ENCODE measurements at regions of chr7 and their contacts with region 1.

Region 1: DNA sequence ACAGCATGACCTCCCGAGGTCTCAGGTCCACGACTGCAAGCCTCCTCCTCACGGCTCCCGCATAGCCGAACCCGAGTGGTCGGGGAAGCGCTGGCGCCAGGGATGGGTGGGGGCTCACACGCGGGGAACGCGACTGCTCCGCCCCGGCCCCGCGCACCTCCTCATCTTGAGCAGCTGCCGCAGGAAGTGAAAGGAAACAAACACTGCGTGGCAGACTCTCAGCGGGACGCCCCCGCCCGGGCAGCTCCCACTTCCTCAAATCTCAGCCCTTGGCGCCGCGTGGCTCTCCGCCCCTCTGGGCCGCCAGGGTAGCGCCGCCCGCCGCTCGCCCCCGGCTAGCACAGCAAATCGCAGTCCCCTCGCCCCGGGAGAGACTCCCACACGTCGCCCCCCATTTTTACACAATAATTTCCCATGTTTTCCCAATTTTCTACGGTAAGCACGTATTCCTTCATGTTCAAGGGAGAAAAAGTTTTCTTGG is at the start of gene TMEM243:
- DNase-seq: peak; percentile 72 to 91 (median 89)
- ATAC-seq: peak; percentile 81
- H3K4me3 ChIP-seq: peak within 1 kb of the TSS; percentile 90
- H3K4me3 Mint-ChIP-seq: peak within 1 kb of the TSS; percentile 96 to 100 (median 99)
- H3K27ac ChIP-seq: peak within 1 kb of the TSS; percentile 96
- H3K27ac Mint-ChIP-seq: peak within 1 kb of the TSS; percentile 94 to 100 (median 99)
- H3K4me1 ChIP-seq: peaks cover 22 to 41% of the 10 kb centered on the region in 2 donors
- H3K4me1 Mint-ChIP-seq: peaks cover 18 to 44% (median 32%) of the 10 kb centered on the region in 7 donors
- H3K27me3 ChIP-seq: no peaks in the 10 kb centered on the region
- H3K27me3 Mint-ChIP-seq: peaks cover 0 to 12% (median 0%) of the 10 kb centered on the region in 5 donors
- total RNA-seq, gene TMEM243: 50.0 to 153 (median 125) TPM

Region 2: DNA sequence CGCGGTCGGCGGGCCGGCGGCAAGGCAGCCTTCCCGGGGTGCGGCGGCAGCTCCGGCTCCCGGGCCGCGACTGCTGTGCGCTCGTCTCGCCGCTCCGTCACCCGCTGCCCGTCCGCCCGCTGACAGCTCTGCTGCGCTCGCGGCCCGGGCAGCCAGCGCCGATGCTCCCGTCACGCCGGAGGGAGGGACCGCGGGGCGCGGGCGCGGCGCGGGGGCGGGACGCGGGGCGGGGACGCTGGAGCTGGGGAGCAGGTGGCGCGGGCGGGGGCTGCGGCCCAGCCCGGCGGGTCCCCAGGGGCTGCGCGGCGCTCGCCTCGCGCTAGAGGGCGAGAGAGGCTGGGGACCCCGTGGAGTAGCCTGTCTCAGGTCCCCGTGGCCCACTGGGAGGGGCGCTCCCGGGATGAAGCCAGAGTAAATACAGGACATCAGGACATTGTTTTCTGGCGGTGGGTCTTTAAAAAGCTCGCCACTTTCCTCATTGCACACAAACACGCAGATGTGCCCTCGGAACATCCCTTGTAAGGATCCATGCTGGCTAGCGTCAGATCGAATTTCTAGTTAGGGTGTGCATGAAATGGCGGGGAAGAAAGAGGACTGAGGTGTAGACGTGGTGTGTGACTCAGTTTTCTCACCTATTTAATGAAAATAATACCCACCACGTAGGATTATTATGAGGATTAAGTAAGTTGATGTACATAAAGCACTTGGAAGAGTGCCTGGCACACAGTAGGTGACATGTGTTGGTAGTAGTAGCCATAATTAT is 159.9 kb before region 1 on chr7 and contains the start of gene ELAPOR2:
- CTCF ChIA-PET with region 1: no interaction called
- POLR2A ChIA-PET with region 1: interaction called, 9 read pairs
- intact Hi-C with region 1: loop called (anchors 1 to 2 kb)
- DNase-seq: peak; percentile 68 to 83 (median 75)
- ATAC-seq: peak; percentile 97
- H3K4me3 ChIP-seq: peak within 1 kb of the TSS; percentile 66
- H3K4me3 Mint-ChIP-seq: peak within 1 kb of the TSS; percentile 78 to 88 (median 84)
- H3K27ac ChIP-seq: peak within 1 kb of the TSS; percentile 52
- H3K27ac Mint-ChIP-seq: peak within 1 kb of the TSS in 8 of 9 donors; percentile 6 to 89 (median 70)
- H3K4me1 ChIP-seq: peaks cover 9 to 10% of the 10 kb centered on the region in 2 donors
- H3K4me1 Mint-ChIP-seq: peaks cover 7 to 18% (median 14%) of the 10 kb centered on the region in 7 donors
- H3K27me3 ChIP-seq: no peaks in the 10 kb centered on the region
- H3K27me3 Mint-ChIP-seq: peaks cover 9 to 23% (median 14%) of the 10 kb centered on the region in 5 donors
- total RNA-seq, gene ELAPOR2: 5.3 to 11.0 (median 6.4) TPM

Region 3: DNA sequence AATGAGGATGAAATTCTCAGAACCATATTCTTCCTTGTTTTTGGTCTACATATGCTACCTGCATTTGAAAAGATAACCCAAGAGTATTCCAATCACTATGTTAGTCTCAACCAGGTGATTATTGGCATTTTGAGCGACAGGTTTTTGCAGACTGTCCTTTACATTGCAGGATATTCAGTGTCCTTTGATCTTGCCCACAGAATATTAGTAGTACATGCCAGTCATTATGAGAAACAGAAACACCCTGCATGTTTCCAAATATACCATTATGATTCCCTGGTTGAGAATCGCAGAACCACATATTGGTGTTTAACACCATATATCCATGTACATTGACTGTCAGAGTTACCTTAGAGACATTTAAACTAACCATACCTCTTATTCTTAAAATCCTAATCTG is 30.7 kb before region 1 on chr7:
- CTCF ChIA-PET with region 1: interaction called, 5 read pairs
- POLR2A ChIA-PET with region 1: interaction called, 25 read pairs
- intact Hi-C with region 1: loop called (anchors 1 to 5 kb)
- DNase-seq: no peak
- ATAC-seq: no peak
- H3K4me3 ChIP-seq: no peak overlapping the region
- H3K4me3 Mint-ChIP-seq: no peak overlapping the region
- H3K27ac ChIP-seq: no peak overlapping the region
- H3K27ac Mint-ChIP-seq: peak overlapping the region in 5 of 9 donors; percentile 7 to 69 (median 26)
- H3K4me1 ChIP-seq: no peaks in the 10 kb centered on the region
- H3K4me1 Mint-ChIP-seq: peaks cover 2 to 54% (median 30%) of the 10 kb centered on the region in 7 donors
- H3K27me3 ChIP-seq: no peaks in the 10 kb centered on the region
- H3K27me3 Mint-ChIP-seq: no peaks in the 10 kb centered on the region

Region 4: DNA sequence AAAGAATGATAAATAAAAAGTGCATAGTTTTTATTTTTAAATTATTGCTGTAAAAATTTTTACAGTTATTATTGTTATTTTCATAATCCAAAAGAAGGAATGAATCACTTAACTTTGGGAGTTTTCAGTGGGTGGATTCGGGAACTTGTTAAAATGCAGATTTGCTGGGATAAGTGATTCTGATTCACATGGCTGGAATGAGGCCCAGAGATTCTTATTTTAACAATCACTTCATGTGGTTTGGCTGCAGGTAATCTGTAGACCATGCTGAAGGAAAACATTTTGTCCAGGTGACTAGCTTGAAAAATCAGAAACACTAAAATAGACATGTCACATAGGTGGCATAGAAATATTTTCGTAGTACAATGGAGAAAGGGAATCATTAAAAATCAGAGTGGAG is 139.8 kb after region 1 on chr7:
- CTCF ChIA-PET with region 1: no interaction called
- POLR2A ChIA-PET with region 1: no interaction called
- intact Hi-C with region 1: no loop called
- DNase-seq: no peak
- ATAC-seq: no peak
- H3K4me3 ChIP-seq: no peak overlapping the region
- H3K4me3 Mint-ChIP-seq: no peak overlapping the region
- H3K27ac ChIP-seq: no peak overlapping the region
- H3K27ac Mint-ChIP-seq: no peak overlapping the region
- H3K4me1 ChIP-seq: no peaks in the 10 kb centered on the region
- H3K4me1 Mint-ChIP-seq: no peaks in the 10 kb centered on the region
- H3K27me3 ChIP-seq: no peaks in the 10 kb centered on the region
- H3K27me3 Mint-ChIP-seq: no peaks in the 10 kb centered on the region

Region 5: GRCh38 chr7:87600130-87601124 is 380.8 kb after region 1 on chr7 and contains the start of gene ABCB1:
- CTCF ChIA-PET with region 1: no interaction called
- POLR2A ChIA-PET with region 1: no interaction called
- intact Hi-C with region 1: loop called in 1 of 2 experiments (anchors 5 kb)
- DNase-seq: peak; percentile 19 to 60 (median 49)
- ATAC-seq: peak; percentile 85
- H3K4me3 ChIP-seq: peak within 1 kb of the TSS; percentile 82
- H3K4me3 Mint-ChIP-seq: peak within 1 kb of the TSS; percentile 76 to 95 (median 85)
- H3K27ac ChIP-seq: peak within 1 kb of the TSS; percentile 68
- H3K27ac Mint-ChIP-seq: peak within 1 kb of the TSS; percentile 29 to 89 (median 81)
- H3K4me1 ChIP-seq: peaks cover 3 to 6% of the 10 kb centered on the region in 2 donors
- H3K4me1 Mint-ChIP-seq: peaks cover 13 to 45% (median 28%) of the 10 kb centered on the region in 7 donors
- H3K27me3 ChIP-seq: no peaks in the 10 kb centered on the region
- H3K27me3 Mint-ChIP-seq: peaks cover 0 to 50% (median 45%) of the 10 kb centered on the region in 5 donors
- total RNA-seq, gene ABCB1: 3.0 to 14.3 (median 10.4) TPM

Region 6: DNA sequence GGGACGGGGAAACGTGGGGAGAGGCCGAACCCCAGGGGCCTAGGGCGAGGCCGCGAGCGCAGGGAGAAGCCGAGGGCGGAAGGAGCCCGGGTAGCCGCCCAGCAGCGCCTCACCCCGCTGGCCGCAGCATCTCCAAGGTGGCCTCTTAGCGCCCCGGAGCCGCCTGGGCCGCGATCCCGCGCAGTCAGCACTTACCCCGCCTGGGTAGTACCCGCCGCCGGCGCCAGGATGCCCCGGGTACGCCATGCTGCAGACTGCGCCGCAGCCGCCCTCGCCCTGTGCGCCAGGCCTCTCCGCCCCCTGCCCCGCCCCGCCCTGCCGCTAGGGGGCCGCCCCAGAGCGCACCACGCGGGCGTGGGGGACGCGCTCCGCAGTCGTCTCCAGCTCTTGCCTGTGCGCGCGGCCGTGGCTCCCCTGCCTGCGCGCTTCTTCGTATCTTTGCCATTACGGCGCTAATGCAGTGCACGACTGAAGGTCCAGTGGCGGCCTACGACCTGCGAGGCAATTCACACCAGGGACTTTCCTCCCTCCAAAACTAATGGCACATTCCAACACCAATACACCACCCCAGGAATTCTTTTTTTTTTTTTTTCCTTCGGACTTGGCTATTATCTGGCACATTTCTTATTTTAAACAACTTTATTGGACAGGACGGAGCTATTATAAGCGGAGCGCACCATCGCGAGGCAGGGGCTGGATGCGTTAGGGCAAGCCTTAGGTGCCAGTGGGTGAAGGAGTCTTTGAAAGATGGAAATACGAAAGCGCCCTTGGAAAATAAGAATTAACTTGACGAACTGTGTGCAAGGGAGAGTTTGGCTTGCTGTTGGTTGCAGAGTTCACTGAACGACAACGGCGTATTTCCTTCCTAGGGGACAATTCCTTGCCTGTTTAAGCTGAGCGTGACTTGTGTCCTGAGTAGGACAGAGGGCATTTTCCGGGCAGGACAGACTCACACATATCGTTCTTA is 1000.5 kb after region 1 on chr7 and contains the start of gene SRI:
- CTCF ChIA-PET with region 1: no interaction called
- POLR2A ChIA-PET with region 1: no interaction called
- intact Hi-C with region 1: loop called (anchors 1 to 5 kb)
- DNase-seq: peak; percentile 85 to 95 (median 93)
- ATAC-seq: peak; percentile 98
- H3K4me3 ChIP-seq: peak within 1 kb of the TSS; percentile 97
- H3K4me3 Mint-ChIP-seq: peak within 1 kb of the TSS; percentile 95 to 99 (median 96)
- H3K27ac ChIP-seq: peak within 1 kb of the TSS; percentile 86
- H3K27ac Mint-ChIP-seq: peak within 1 kb of the TSS; percentile 90 to 99 (median 94)
- H3K4me1 ChIP-seq: peaks cover 15 to 18% of the 10 kb centered on the region in 2 donors
- H3K4me1 Mint-ChIP-seq: peaks cover 13 to 42% (median 34%) of the 10 kb centered on the region in 7 donors
- H3K27me3 ChIP-seq: peaks cover 0 to 4% of the 10 kb centered on the region in 2 donors
- H3K27me3 Mint-ChIP-seq: peaks cover 0 to 8% (median 0%) of the 10 kb centered on the region in 5 donors
- total RNA-seq, gene SRI: 39.9 to 131 (median 60.0) TPM

Measured in naive thymus-derived CD4-positive, alpha-beta T cell (primary cell).